Mammary epithelial cell (primary cell): ENCODE measurements at regions of chr14 and their contacts with region 1.

Region 1: DNA sequence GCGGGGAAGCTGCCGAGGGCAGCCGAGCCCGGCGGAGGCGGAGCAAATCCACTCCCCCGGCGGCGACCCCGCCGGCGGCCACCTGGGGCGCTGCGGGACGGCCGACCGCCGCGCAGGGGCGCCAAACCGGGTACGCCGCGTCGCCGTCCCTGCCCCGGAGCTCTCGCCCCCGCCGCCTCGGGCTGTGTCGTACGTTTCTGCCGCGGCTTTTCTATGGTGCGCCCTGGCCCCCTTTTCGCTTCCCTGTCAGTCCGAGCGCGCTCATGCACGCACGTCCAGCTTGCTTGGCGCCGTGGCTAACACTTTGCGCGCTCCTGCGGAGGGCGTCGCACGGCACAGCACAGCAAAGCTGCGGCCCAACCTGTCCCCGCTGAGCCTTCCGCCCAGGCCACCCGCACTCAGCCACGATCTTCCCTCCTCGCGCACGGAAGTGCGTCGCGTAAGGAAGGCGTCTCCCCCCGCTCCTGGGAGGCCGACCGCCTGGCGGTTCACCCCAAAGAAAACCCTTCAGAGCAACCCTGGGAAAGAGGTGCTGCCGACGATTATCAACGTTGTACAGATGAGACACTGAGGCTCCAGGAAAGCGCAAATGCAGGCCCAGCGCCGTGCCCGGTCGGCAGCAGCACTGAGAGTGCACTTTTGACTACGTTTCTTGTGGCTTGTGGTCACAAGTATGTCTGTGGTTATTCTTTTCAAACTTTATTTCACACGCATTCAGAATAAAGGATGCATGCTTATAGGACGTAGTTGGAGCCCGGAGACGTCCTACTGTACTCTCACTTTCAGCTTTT is at the start of gene HECTD1:
- DNase-seq: peak; percentile 88
- H3K4me3 ChIP-seq: peak within 1 kb of the TSS; percentile 74 to 81 (median 76)
- H3K27ac ChIP-seq: peak within 1 kb of the TSS; percentile 83
- H3K4me1 ChIP-seq: peaks cover 18% of the 10 kb centered on the region
- H3K27me3 ChIP-seq: no peaks in the 10 kb centered on the region
- CTCF ChIP-seq: peak; percentile 42 to 43
- total RNA-seq, gene HECTD1: 120 to 162 TPM

Region 2: DNA sequence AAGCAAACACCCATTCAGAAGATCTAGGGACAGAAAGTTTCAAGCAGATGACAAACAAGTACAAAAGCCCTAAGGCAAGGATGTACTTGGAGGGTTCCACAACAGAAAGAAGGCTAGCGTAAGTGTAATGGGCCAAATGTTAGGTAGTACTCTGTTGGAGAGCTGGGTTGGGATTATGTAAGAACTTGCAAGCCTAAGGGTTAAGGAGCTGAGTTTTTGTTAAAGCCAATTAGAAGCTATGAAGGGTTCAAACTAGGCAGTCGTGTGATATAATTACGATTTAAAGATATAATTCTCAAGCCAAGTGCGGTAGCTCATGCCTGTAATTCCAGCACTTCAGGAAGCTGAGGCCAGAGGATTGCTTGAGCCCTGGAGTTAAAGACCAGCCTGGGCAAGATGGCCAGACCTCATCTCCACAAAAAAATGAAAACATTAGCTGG is 41.7 kb before region 1 on chr14:
- CTCF ChIA-PET with region 1: no interaction called
- dilution Hi-C with region 1: no loop called
- in situ Hi-C with region 1: no loop called
- intact Hi-C with region 1: loop called (anchors 2 kb)
- DNase-seq: peak; percentile 8
- H3K4me3 ChIP-seq: no peak overlapping the region
- H3K27ac ChIP-seq: peak overlapping the region; percentile 73
- H3K4me1 ChIP-seq: peaks cover 27% of the 10 kb centered on the region
- H3K27me3 ChIP-seq: no peaks in the 10 kb centered on the region
- CTCF ChIP-seq: no peak

Region 3: DNA sequence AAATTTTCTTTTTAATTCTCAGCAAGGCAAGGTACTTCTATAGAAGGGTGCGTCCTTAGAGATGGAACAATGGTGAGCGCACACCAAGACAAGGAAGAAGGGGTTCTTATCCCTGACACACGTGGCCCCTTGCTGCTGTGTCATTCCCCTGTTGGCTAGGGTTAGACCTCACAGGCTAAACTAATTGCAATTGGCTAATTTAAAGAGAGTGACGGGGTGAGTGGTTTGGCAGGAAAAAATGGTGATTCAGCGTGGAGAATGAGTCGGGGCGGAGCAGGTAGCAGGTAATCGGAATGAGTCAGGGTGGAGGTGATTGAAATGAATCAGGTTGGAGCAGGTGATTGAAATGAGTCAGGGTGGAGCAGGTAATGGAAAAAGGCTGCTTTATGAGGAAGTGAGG is 35.9 kb after region 1 on chr14:
- CTCF ChIA-PET with region 1: no interaction called
- dilution Hi-C with region 1: no loop called
- in situ Hi-C with region 1: no loop called
- intact Hi-C with region 1: loop called (anchors 5 kb)
- DNase-seq: peak; percentile 97
- H3K4me3 ChIP-seq: no peak overlapping the region
- H3K27ac ChIP-seq: peak overlapping the region; percentile 84
- H3K4me1 ChIP-seq: peaks cover 21% of the 10 kb centered on the region
- H3K27me3 ChIP-seq: no peaks in the 10 kb centered on the region
- CTCF ChIP-seq: no peak

Region 4: GRCh38 chr14:31307198-31307597 is 99.2 kb after region 1 on chr14:
- CTCF ChIA-PET with region 1: no interaction called
- dilution Hi-C with region 1: no loop called
- in situ Hi-C with region 1: no loop called
- intact Hi-C with region 1: loop called (anchors 5 kb)
- DNase-seq: no peak
- H3K4me3 ChIP-seq: no peak overlapping the region
- H3K27ac ChIP-seq: no peak overlapping the region
- H3K4me1 ChIP-seq: no peaks in the 10 kb centered on the region
- H3K27me3 ChIP-seq: no peaks in the 10 kb centered on the region
- CTCF ChIP-seq: peak in 1 of 2 donors; percentile 29

Region 5: GRCh38 chr14:31360919-31361662 is 153.1 kb after region 1 on chr14:
- CTCF ChIA-PET with region 1: no interaction called
- dilution Hi-C with region 1: no loop called
- in situ Hi-C with region 1: loop called (anchors 5 to 10 kb)
- intact Hi-C with region 1: loop called (anchors 1 kb)
- DNase-seq: peak; percentile 79
- H3K4me3 ChIP-seq: no peak overlapping the region
- H3K27ac ChIP-seq: peak overlapping the region; percentile 98
- H3K4me1 ChIP-seq: peaks cover 18% of the 10 kb centered on the region
- H3K27me3 ChIP-seq: no peaks in the 10 kb centered on the region
- CTCF ChIP-seq: no peak

Region 6: DNA sequence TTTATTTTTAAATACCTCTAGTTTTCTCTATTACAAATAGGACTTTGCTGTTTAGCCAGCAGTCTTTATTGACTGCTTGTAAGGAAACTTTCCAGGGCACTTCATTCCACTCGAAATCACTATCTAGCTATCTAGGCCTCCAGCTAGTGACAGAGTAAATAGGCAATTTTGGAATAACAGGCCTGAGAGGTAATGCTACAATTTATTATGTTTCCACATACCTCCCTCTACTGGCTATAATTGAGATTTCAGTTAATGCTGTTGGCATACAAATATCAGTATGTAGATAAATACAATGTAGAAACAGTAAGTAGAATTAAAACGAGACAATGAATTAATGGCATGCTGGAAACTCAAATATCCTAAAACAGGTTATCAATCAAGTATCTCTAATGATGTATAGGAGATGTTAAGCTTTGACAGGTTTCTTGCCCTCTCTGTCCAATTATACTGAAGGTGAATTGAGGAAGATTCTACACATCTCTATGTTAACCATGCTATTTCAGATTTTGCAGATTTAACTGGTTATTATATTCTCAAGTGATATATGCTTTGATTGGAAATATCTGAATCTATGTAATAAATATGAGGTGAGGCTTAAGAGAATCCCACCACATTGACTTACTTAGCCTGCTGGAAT is 242.1 kb after region 1 on chr14:
- CTCF ChIA-PET with region 1: no interaction called
- dilution Hi-C with region 1: no loop called
- in situ Hi-C with region 1: no loop called
- intact Hi-C with region 1: loop called (anchors 5 kb)
- DNase-seq: peak; percentile 28
- H3K4me3 ChIP-seq: no peak overlapping the region
- H3K27ac ChIP-seq: no peak overlapping the region
- H3K4me1 ChIP-seq: no peaks in the 10 kb centered on the region
- H3K27me3 ChIP-seq: no peaks in the 10 kb centered on the region
- CTCF ChIP-seq: peak; percentile 56 to 59